Tibial artery (tissue), 4 donors: ENCODE measurements at regions of chr3 and their contacts with region 1.

Region 1: DNA sequence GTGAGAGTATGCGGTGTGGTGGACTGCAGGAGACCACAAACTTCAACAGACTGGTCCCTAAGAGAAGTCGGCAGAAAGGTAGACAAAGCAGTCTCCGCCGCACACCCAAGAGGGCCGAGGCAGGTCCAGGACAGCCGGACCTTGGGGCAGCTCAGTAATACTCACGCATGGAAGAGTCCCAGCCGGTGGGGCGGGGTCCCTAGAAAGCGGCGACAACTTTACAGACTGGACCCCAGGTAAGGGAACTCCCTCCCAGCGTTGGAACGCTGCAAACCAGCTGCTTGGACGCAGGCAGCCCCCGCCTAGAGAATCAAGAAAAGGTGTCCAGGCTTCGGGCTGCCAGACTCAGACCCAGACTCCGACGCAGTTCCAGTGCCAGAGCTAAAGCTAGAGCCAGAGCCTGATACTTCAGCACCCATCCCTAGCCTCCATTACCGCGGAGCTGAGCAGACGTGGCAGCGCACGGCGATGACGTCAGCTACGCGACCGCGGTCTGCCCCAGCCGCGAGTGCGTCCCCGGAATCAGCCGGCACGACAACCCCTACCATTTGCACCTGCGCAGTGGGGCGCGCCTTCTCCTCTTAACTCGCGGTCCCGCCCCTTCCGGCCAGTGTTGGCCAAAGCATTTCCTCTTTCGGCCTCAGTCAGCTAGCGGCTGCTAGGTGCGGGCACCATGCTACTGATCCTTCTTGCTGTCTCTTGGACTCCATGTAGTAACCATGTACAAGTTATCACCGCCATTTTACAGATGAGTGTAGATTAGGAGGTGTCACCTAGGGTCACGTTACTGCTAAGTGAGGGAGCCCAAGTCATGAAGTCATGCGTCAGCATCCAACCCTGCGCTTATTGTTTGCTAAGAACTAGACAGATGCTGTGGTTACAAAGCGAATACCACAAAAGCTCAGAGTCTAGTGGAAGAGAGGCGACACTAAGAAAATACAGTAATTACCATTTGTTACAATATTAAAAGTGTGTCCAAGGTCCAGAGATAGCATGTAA is at the start of gene TMEM39A:
- DNase-seq: peak; percentile 99 to 100
- H3K4me3 ChIP-seq: peak within 1 kb of the TSS; percentile 68 to 76
- H3K27ac ChIP-seq: peak within 1 kb of the TSS; percentile 80 to 83
- H3K4me1 ChIP-seq: peaks cover 0 to 39% (median 35%) of the 10 kb centered on the region in 4 donors
- H3K27me3 ChIP-seq: no peaks in the 10 kb centered on the region
- CTCF ChIP-seq: peak in 1 of 2 experiments; percentile 16

Region 2: DNA sequence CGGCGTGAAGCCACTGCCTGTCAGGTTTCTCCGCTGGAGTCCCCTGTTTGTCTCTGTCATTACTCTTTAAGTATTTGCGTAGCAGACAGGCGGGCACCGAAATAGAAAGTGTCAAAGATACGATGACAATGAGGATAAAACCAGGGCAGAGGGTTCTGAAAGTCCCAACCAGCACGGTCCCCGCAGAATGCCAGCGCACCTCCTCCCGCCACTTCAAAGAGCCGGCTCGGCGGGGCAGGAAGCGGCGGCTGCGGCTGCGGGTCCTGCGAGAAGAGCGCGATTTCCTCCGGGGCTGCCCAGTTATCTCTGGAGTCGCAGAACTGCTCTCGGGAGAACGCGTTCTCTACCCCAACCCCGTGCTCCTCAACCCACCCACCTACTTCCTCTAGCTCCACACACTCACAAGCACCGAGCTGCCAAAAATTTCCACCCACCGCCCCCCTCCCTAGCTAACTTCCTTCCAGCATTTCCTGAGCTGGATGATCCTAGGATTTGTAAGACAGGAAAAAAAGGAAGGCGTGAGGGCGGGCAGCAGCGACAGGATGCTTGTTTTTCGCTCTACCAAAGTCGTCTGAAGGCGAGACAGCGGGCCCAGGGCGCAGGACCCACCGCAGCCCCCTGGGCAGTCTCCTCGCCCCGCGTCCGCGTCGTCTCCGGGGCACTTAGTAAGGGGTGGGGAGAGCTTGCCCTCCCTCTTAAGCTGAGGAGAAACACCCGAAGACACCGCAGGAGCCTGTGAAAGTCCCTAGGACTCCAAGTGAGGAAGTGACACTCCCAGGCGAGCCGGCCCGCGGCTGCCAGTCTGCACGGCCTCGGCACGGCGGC is 169.4 kb before region 1 on chr3 and contains the start of gene ARHGAP31:
- intact Hi-C with region 1: loop called (anchors 5 kb)
- DNase-seq: peak; percentile 64 to 78
- H3K4me3 ChIP-seq: peak within 1 kb of the TSS; percentile 85 to 90
- H3K27ac ChIP-seq: peak within 1 kb of the TSS; percentile 87 to 95
- H3K4me1 ChIP-seq: peaks cover 0 to 29% (median 12%) of the 10 kb centered on the region in 4 donors
- H3K27me3 ChIP-seq: peaks cover 0 to 2% of the 10 kb centered on the region in 2 donors
- CTCF ChIP-seq: no peak

Region 3: DNA sequence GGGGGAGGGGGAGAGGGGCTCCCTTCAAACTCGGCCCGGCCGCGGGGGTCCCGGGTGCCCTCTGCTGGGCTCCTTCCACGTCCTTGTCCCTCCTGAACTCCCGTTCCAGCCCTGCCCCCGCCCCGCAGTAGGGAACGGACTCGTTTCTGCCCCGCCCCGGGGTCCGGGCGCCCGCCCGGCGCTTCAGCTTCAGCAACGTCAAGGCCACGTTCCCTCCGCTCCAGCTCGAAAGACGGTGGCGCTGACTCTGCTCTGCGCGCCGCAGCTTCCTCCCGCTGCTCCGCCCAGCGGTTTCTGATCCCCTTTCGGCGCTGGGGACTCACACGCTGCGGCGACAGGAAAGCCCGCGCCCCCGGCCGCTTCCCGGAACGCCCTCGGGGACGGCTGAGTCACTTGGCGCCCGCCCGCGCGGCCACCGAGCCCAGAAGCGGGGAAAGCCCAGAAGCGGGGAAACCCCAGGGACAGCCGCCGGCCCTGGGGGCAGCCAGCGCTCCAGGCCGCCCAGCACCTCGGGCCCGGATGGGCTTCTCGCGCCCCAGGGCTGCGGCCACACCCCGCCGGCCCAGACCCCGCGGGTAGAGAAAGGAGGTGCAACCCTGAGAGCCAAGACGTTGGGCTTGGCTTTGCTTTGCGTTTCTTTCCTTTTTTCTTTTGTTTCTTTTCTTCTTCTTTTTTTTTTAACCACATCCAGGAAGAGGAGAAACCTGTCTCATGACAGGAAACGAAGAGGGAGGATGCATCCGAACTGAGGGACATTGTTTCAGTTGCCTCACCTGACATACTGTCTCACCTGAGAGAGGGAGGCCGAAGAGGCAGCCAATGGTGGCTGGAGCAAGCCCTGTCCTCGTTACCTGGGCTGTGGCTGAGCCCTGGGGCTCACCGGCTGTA is 140.4 kb before region 1 on chr3:
- intact Hi-C with region 1: loop called (anchors 10 kb)
- DNase-seq: peak; percentile 77 to 91
- H3K4me3 ChIP-seq: peak overlapping the region; percentile 61 to 89
- H3K27ac ChIP-seq: peak overlapping the region; percentile 88 to 91
- H3K4me1 ChIP-seq: peaks cover 0 to 10% (median 3%) of the 10 kb centered on the region in 4 donors
- H3K27me3 ChIP-seq: no peaks in the 10 kb centered on the region
- CTCF ChIP-seq: peak in 1 of 2 experiments; percentile 5

Region 4: GRCh38 chr3:119676771-119677640 is 213.5 kb after region 1 on chr3 and contains the start of gene COX17:
- intact Hi-C with region 1: loop called (anchors 5 kb)
- DNase-seq: peak; percentile 93 to 96
- H3K4me3 ChIP-seq: peak within 1 kb of the TSS; percentile 62 to 85
- H3K27ac ChIP-seq: peak within 1 kb of the TSS; percentile 81 to 86
- H3K4me1 ChIP-seq: peaks cover 0 to 17% (median 7%) of the 10 kb centered on the region in 4 donors
- H3K27me3 ChIP-seq: no peaks in the 10 kb centered on the region
- CTCF ChIP-seq: no peak